Activated CD8-positive, alpha-beta T cell treated with anti-CD3 and anti-CD28 coated beads, Interleukin-2, amount 10 ng/mL, durations not matched to agents 7 days and 5 days (primary cell): ENCODE measurements at regions of chr22 and their contacts with region 1.

Region 1: DNA sequence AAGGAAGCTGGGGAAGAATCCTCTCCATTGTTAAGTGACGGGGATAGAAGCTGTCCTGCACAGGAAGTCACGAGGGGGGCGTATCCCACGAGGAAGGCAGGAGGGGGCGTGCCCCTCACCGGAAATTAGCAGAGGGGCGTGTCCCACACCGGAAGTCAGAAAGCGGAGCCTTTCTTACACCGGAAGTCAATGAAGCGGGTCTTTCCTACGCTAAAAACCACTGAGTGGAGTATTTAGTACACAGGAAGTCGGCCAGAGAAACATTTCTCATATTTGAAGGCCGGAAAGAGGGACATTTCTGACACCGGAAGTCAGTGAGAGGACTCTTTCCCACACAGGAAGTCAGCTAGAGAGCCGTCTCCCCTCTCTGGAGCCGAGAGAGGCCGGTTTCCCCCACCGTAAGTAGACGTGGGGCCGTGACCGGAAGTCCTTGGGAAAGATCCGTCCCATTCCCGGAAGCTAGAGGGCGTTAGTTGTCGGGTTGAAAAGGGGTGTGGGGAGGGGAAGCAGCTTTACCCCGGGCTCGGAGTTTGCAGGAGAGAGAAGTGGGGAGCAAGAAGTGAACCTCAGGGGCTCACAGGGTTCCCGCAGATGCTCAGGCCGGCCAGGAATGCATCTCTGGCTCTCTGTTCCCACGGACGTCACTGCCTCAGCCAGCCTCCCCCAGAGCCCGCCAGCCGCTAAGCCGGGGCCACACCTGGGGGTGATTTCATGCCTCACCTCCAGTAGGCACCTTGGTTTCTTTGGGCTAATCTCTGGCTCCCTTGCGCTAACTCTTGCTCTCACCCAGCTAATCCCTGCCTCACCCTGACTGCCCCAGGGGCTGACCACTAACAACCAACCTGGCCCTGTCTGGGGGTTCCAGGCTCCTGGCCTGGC is 15.4 kb downstream of the MIAT start:
- DNase-seq: peak; percentile 97
- ATAC-seq: peak; percentile 68
- H3K4me3 Mint-ChIP-seq: peak overlapping the region; percentile 97
- H3K27ac Mint-ChIP-seq: peak overlapping the region; percentile 98
- H3K4me1 Mint-ChIP-seq: peaks cover 70% of the 10 kb centered on the region
- H3K27me3 Mint-ChIP-seq: no peaks in the 10 kb centered on the region

Region 2: GRCh38 chr22:26404851-26405421 is 267.9 kb before region 1 on chr22:
- CTCF ChIA-PET with region 1: no interaction called
- POLR2A ChIA-PET with region 1: no interaction called
- DNase-seq: no peak
- ATAC-seq: no peak
- H3K4me3 Mint-ChIP-seq: no peak overlapping the region
- H3K27ac Mint-ChIP-seq: no peak overlapping the region
- H3K4me1 Mint-ChIP-seq: peaks cover 10% of the 10 kb centered on the region
- H3K27me3 Mint-ChIP-seq: peaks cover 14% of the 10 kb centered on the region

Region 3: DNA sequence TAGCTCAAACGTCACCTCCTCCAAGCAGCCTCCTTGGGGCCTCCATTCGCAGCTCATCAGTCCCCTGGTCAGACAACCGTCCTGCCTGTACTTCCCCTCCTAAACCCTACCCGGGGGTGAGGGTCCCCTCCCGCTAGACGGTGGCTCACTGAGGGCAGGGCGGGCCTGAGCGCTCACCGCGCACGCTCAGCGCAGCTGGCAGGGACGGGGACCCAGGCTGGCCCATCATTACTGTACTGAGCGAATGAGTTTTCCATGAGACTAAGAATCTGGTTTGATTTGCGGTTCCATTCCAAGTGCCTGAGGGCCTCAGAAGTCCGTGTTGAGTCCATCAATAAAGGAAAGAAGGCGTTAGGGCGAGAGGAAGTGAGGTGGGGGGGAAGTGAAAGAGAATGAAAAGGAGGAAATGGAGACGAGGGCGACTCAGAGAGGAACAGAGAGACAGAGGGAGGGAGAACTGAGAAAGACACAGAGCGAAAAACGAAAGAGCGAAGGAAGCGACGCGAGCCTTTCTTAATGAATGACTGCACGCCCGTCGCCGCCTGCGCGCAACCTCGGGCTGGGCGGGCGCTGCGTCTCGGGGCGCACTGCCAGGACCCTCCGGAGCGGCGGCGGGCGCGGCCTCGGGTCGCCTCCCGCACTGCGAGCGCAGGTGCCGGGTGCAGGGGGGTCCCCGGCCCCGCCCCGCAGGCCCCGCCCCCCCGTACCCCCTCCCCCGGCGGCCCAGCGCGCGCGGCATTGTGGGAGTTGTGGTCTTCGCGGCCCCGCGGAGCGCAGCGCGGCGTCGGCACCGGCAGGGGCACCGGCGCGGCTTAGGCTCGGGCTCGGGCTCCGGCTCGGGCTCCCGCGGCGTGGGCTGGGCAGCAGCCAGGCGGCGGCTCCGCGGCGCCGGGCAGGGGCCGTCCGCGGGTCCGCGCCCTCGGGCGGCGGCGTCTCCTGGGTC is 244.0 kb before region 1 on chr22 and contains the start of gene ASPHD2:
- CTCF ChIA-PET with region 1: no interaction called
- POLR2A ChIA-PET with region 1: interaction called, 12 read pairs
- DNase-seq: peak; percentile 83
- ATAC-seq: peak; percentile 90
- H3K4me3 Mint-ChIP-seq: peak within 1 kb of the TSS; percentile 94
- H3K27ac Mint-ChIP-seq: peak within 1 kb of the TSS; percentile 99
- H3K4me1 Mint-ChIP-seq: peaks cover 51% of the 10 kb centered on the region
- H3K27me3 Mint-ChIP-seq: peaks cover 15% of the 10 kb centered on the region
- total RNA-seq, gene ASPHD2: 9.2 to 10.0 TPM

Region 4: DNA sequence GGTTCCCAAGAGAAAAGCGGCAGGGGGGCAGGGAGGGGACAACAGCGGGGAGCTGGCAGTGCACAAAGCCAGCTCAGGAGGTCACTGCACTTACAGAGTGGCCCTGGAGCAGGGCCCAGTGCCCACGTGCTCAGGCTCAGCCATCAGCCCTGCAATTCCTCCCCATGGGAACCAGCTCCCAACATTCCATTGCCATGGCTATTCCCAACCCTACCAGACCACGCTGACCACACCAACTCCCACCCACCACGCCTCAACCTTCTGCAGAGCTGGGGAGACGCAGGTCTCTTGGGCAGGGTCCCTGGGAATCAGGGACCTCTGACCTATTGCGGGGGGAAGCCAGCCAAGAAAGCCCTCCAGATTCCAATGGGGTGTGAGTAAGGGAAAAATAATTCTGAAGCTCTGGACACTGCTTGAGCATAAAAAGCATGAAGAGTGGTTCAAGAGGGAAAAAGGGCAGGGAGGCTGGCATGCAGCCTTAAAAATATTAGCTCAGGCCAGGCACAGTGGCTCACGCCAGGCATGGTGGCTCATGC is 122.3 kb before region 1 on chr22:
- CTCF ChIA-PET with region 1: no interaction called
- POLR2A ChIA-PET with region 1: no interaction called
- DNase-seq: no peak
- ATAC-seq: no peak
- H3K4me3 Mint-ChIP-seq: no peak overlapping the region
- H3K27ac Mint-ChIP-seq: no peak overlapping the region
- H3K4me1 Mint-ChIP-seq: peaks cover 49% of the 10 kb centered on the region
- H3K27me3 Mint-ChIP-seq: no peaks in the 10 kb centered on the region